B cell (primary cell): ENCODE measurements at regions of chr20 and their contacts with region 1.

Region 1: GRCh38 chr20:4384961-4385360 is 336.7 kb upstream of the PRND start:
- DNase-seq: no peak
- ATAC-seq: no peak
- H3K4me3 ChIP-seq: no peak overlapping the region
- H3K4me3 Mint-ChIP-seq: no peak overlapping the region
- H3K27ac ChIP-seq: no peak overlapping the region
- H3K27ac Mint-ChIP-seq: no peak overlapping the region
- H3K4me1 ChIP-seq: no peaks in the 10 kb centered on the region
- H3K4me1 Mint-ChIP-seq: no peaks in the 10 kb centered on the region
- H3K27me3 ChIP-seq: peaks cover 0 to 5% (median 0%) of the 10 kb centered on the region in 4 experiments
- H3K27me3 Mint-ChIP-seq: peaks cover 22% of the 10 kb centered on the region
- CTCF ChIP-seq: no peak

Region 2: GRCh38 chr20:3804254-3804751 is 580.7 kb before region 1 on chr20:
- CTCF ChIA-PET with region 1: no interaction called
- POLR2A ChIA-PET with region 1: no interaction called
- intact Hi-C with region 1: no loop called
- DNase-seq: no peak
- ATAC-seq: no peak
- H3K4me3 ChIP-seq: no peak overlapping the region
- H3K4me3 Mint-ChIP-seq: no peak overlapping the region
- H3K27ac ChIP-seq: no peak overlapping the region
- H3K27ac Mint-ChIP-seq: no peak overlapping the region
- H3K4me1 ChIP-seq: peaks cover 22 to 43% of the 10 kb centered on the region in 2 donors
- H3K4me1 Mint-ChIP-seq: peaks cover 41% of the 10 kb centered on the region
- H3K27me3 ChIP-seq: no peaks in the 10 kb centered on the region
- H3K27me3 Mint-ChIP-seq: no peaks in the 10 kb centered on the region
- CTCF ChIP-seq: no peak

Region 3: GRCh38 chr20:4174909-4175308 is 210.1 kb before region 1 on chr20:
- CTCF ChIA-PET with region 1: no interaction called
- POLR2A ChIA-PET with region 1: no interaction called
- intact Hi-C with region 1: loop called (anchors 5 kb)
- DNase-seq: no peak
- ATAC-seq: no peak
- H3K4me3 ChIP-seq: no peak overlapping the region
- H3K4me3 Mint-ChIP-seq: no peak overlapping the region
- H3K27ac ChIP-seq: no peak overlapping the region
- H3K27ac Mint-ChIP-seq: no peak overlapping the region
- H3K4me1 ChIP-seq: peaks cover 11 to 13% of the 10 kb centered on the region in 2 donors
- H3K4me1 Mint-ChIP-seq: peaks cover 10% of the 10 kb centered on the region
- H3K27me3 ChIP-seq: peaks cover 0 to 7% (median 2%) of the 10 kb centered on the region in 4 experiments
- H3K27me3 Mint-ChIP-seq: peaks cover 22% of the 10 kb centered on the region
- CTCF ChIP-seq: no peak

Region 4: DNA sequence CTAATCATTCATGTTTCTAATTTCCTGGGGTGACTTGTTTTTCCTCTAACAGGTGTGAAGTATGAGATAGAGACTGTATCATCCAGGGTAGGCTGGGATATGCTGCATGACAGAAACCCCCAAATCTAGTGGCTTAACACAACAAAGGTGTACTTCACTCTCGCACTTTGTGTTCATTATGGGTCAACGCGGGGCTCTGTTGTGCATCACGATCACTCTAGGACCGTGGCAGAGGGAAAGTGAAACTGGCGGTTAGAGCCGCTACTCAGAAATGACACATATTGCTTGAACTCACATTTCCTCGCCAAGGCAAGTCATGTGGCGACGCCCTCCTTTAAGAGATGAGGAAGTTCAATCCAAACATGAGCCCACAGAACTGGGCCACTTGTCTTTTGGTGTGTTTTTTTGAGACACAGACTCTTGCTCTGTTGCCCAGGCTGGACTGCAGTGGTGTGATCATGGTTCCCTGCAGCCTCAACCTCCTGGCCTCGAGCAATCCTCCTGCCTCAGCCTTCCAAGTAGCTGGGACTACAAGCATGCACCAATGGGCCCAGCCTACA is 693.5 kb after region 1 on chr20:
- CTCF ChIA-PET with region 1: no interaction called
- POLR2A ChIA-PET with region 1: no interaction called
- intact Hi-C with region 1: no loop called
- DNase-seq: peak; percentile 91
- ATAC-seq: peak; percentile 96
- H3K4me3 ChIP-seq: peak overlapping the region; percentile 23 to 68 (median 50)
- H3K4me3 Mint-ChIP-seq: peak overlapping the region; percentile 85
- H3K27ac ChIP-seq: peak overlapping the region; percentile 85 to 93
- H3K27ac Mint-ChIP-seq: peak overlapping the region; percentile 94
- H3K4me1 ChIP-seq: peaks cover 37 to 50% of the 10 kb centered on the region in 2 donors
- H3K4me1 Mint-ChIP-seq: peaks cover 51% of the 10 kb centered on the region
- H3K27me3 ChIP-seq: no peaks in the 10 kb centered on the region
- H3K27me3 Mint-ChIP-seq: no peaks in the 10 kb centered on the region
- CTCF ChIP-seq: no peak